Mammary epithelial cell (primary cell): ENCODE measurements at regions of chr16 and their contacts with region 1.

Region 1: GRCh38 chr16:72501739-72502593 is 330.0 kb upstream of the PMFBP1 start:
- DNase-seq: peak; percentile 39
- H3K4me3 ChIP-seq: no peak overlapping the region
- H3K27ac ChIP-seq: no peak overlapping the region
- H3K4me1 ChIP-seq: no peaks in the 10 kb centered on the region
- H3K27me3 ChIP-seq: no peaks in the 10 kb centered on the region
- CTCF ChIP-seq: peak; percentile 84 to 91

Region 2: GRCh38 chr16:72400257-72400882 is 101.6 kb before region 1 on chr16:
- CTCF ChIA-PET with region 1: interaction called, 13 read pairs
- dilution Hi-C with region 1: no loop called
- in situ Hi-C with region 1: no loop called
- intact Hi-C with region 1: no loop called
- DNase-seq: peak; percentile 28
- H3K4me3 ChIP-seq: no peak overlapping the region
- H3K27ac ChIP-seq: no peak overlapping the region
- H3K4me1 ChIP-seq: no peaks in the 10 kb centered on the region
- H3K27me3 ChIP-seq: no peaks in the 10 kb centered on the region
- CTCF ChIP-seq: peak; percentile 68 to 74

Region 3: GRCh38 chr16:72560617-72561016 is 58.7 kb after region 1 on chr16:
- CTCF ChIA-PET with region 1: no interaction called
- dilution Hi-C with region 1: no loop called
- in situ Hi-C with region 1: no loop called
- intact Hi-C with region 1: no loop called
- DNase-seq: no peak
- H3K4me3 ChIP-seq: no peak overlapping the region
- H3K27ac ChIP-seq: no peak overlapping the region
- H3K4me1 ChIP-seq: no peaks in the 10 kb centered on the region
- H3K27me3 ChIP-seq: no peaks in the 10 kb centered on the region
- CTCF ChIP-seq: no peak

Region 4: GRCh38 chr16:72664509-72665225 is 162.7 kb after region 1 on chr16:
- CTCF ChIA-PET with region 1: no interaction called
- dilution Hi-C with region 1: no loop called
- in situ Hi-C with region 1: no loop called
- intact Hi-C with region 1: loop called (anchors 1 kb)
- DNase-seq: peak; percentile 98
- H3K4me3 ChIP-seq: peak overlapping the region; percentile 74 to 85 (median 81)
- H3K27ac ChIP-seq: peak overlapping the region; percentile 86
- H3K4me1 ChIP-seq: peaks cover 10% of the 10 kb centered on the region
- H3K27me3 ChIP-seq: no peaks in the 10 kb centered on the region
- CTCF ChIP-seq: no peak

Region 5: DNA sequence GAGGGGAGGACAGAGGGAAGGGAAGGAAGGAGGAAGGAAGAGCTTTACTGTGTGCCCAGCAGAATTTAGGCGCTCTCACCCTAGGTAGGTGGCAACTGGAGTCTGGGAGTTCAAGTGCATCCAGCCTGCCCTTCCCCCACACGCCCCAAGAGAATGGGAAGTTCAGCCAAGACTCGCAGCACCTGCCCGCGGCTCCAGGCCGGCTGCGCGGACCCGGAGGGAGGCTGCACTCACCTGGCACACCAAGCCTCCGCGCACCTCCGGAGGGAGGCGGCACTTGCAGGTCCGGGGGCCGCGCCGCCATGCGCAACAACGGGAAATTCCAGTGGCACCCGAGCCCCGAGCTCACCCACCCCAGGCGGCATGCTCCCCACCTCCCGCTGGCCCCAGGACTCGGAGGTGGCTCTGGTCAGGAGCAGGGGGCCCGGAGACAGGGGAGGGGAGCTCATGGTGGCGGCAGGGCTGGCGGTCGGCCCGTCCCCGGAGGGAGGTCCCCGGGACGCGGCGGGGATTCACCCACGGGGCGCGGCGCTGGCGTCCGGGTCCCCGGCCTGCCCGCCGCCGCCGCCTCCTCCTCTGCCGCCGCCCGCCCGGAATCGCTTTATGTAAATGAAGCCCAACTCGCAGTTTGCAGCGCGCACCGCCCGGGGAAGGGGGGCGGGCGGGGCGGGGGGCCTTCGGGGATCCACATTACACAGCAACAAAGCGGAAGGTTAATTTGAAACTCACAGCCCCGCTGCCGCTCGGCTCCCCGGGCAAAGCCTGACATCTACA is 545.7 kb after region 1 on chr16 and contains the start of gene ZFHX3:
- CTCF ChIA-PET with region 1: no interaction called
- dilution Hi-C with region 1: no loop called
- in situ Hi-C with region 1: no loop called
- intact Hi-C with region 1: loop called (anchors 5 kb)
- DNase-seq: peak; percentile 70
- H3K4me3 ChIP-seq: peak within 1 kb of the TSS; percentile 56 to 74 (median 57)
- H3K27ac ChIP-seq: peak within 1 kb of the TSS; percentile 34
- H3K4me1 ChIP-seq: peaks cover 22% of the 10 kb centered on the region
- H3K27me3 ChIP-seq: no peaks in the 10 kb centered on the region
- CTCF ChIP-seq: peak in 1 of 2 donors; percentile 9
- total RNA-seq, gene ZFHX3: 6.7 to 11.3 TPM

Region 6: GRCh38 chr16:74034862-74035261 is 1532.9 kb after region 1 on chr16:
- CTCF ChIA-PET with region 1: no interaction called
- dilution Hi-C with region 1: no loop called
- in situ Hi-C with region 1: no loop called
- intact Hi-C with region 1: loop called (anchors 5 kb)
- DNase-seq: peak; percentile 6
- H3K4me3 ChIP-seq: no peak overlapping the region
- H3K27ac ChIP-seq: no peak overlapping the region
- H3K4me1 ChIP-seq: no peaks in the 10 kb centered on the region
- H3K27me3 ChIP-seq: peaks cover 2% of the 10 kb centered on the region
- CTCF ChIP-seq: peak; percentile 30 to 44